Naive thymus-derived CD4-positive, alpha-beta T cell (primary cell): ENCODE measurements at regions of chr1 and their contacts with region 1.

Region 1: DNA sequence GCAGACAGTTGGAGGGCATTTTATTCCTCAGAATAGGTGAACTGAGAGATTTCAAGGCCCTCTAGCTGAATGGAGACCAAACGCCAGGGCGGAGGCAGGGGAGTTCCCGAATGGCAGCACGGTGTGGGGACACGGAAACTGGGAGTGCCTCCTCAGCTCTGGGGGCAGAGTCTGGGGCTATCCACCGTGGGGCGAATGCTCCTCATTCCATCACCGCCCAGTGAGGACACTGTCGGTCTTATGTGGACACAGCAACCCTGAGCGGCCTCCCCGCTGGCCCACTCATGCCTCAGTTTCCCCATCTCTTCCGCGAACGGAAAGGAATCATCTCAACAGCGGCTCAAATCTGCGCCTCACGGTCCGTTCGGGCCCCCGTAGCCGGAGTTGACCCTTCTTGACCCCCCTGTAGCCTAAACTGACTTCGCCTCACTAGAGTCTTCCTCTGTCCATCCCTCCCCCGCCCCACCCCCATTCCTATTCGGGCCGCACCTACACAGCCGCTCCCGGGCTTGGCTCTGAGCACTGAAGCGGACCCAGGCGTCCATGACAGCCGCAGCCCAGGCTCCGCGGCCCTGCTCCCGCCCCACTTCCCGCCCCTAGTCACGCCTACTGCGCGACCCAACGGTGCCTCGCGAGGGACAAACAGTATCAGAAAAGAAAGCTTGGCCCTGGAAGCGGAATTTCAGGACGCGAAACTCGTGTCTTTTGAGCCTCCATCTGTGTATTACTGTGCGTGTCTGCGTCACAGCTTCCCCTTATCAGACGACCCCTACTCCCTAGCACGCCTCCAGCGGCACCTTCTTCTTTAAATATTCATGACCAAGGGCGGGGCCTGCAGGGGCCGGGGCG is at the start of gene PEX11B:
- DNase-seq: peak; percentile 80 to 95 (median 93)
- ATAC-seq: peak; percentile 94
- H3K4me3 ChIP-seq: peak within 1 kb of the TSS; percentile 82
- H3K4me3 Mint-ChIP-seq: peak within 1 kb of the TSS; percentile 92 to 98 (median 96)
- H3K27ac ChIP-seq: peak within 1 kb of the TSS; percentile 83
- H3K27ac Mint-ChIP-seq: peak within 1 kb of the TSS; percentile 93 to 98 (median 96)
- H3K4me1 ChIP-seq: peaks cover 21 to 23% of the 10 kb centered on the region in 2 donors
- H3K4me1 Mint-ChIP-seq: peaks cover 27 to 75% (median 61%) of the 10 kb centered on the region in 7 donors
- H3K27me3 ChIP-seq: no peaks in the 10 kb centered on the region
- H3K27me3 Mint-ChIP-seq: no peaks in the 10 kb centered on the region
- total RNA-seq, gene PEX11B: 16.4 to 40.4 (median 37.7) TPM

Region 2: DNA sequence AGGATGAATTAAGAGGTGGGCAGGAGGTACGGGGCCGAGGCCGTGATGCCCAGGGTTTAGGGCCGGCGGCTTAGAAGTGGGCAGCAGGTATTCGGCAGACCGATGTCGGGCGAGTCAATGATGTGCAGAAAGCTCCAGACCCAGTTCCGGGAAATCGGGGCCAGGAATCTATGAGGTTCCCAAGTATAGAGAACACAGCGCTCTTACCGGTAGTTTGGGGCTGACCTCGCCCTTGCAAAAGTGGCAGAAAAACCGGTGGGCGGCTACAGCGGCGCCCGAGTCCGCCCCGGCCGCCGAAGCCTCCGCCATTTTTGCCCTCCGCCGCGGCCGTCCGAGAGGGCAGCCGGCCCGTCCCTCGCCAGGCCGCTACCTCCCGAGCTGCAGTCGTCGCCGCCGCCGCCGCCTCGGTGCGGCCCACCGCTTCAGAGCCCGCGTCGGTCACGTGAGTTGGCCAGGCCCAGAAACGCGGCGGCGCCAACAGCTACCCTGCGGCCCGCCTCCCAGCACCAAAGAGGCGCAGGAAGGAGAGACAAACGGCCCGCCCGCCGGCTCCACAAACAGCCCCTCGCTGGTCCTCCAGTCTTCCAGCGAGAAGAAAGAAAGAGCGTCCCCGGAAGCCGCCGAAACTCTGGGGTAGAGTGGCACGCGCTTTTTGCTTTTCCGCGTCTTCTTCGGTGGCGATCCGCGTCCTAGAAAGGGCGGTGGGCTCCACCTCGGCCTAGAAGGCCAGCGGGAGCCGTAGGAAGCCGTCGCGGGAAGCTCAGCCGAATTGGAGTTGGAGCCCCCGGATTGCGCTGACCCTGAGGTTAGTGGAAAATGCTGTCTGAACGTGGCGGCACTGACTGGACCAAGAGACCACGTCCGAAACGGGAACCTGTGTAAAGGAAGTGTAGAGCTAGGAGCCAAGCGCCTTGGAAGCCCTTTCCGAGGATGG is 94.5 kb before region 1 on chr1 and contains the starts of genes POLR3C and RNF115:
- CTCF ChIA-PET with region 1: no interaction called
- POLR2A ChIA-PET with region 1: interaction called, 5 read pairs
- intact Hi-C with region 1: loop called in 1 of 2 experiments (anchors 2 kb)
- DNase-seq: peak; percentile 63 to 88 (median 82)
- ATAC-seq: peak; percentile 95
- H3K4me3 ChIP-seq: peak within 1 kb of the TSS; percentile 99
- H3K4me3 Mint-ChIP-seq: peak within 1 kb of the TSS; percentile 91 to 100 (median 98)
- H3K27ac ChIP-seq: peak within 1 kb of the TSS; percentile 82
- H3K27ac Mint-ChIP-seq: peak within 1 kb of the TSS; percentile 91 to 98 (median 96)
- H3K4me1 ChIP-seq: peaks cover 10 to 14% of the 10 kb centered on the region in 2 donors
- H3K4me1 Mint-ChIP-seq: peaks cover 19 to 43% (median 35%) of the 10 kb centered on the region in 7 donors
- H3K27me3 ChIP-seq: no peaks in the 10 kb centered on the region
- H3K27me3 Mint-ChIP-seq: no peaks in the 10 kb centered on the region
- total RNA-seq, gene POLR3C: 22.0 to 44.4 (median 32.5) TPM
- total RNA-seq, gene RNF115: 11.4 to 17.3 (median 15.6) TPM

Region 3: DNA sequence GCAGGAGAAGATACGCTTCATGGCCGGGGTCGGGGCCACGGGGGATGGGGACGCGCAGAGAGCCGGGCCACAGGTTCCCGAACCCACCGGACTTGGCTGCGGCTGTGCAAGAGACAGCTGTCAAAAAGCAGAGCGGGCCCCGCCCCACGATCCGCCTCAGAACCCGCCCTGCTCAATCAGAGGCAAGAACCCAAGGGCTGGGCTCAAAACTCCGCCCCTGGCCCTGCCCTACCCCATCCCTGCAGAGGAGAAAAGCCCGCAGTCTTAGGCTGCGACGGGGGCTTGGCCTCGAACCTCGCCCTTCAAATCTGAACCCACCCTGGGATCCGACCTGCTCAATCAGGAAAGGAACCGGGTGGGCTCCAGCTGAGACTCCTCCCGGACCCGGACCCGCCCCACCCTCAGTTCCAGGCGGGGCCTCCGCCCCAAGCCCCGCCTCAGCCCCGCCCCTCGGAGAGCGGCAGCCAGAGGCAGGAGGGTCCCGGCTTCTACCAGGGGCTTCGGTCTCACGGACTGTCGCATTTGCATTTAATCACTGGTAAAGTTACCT is 32.6 kb before region 1 on chr1 and contains the start of gene ANKRD35:
- CTCF ChIA-PET with region 1: interaction called, 3 read pairs
- POLR2A ChIA-PET with region 1: interaction called, 3 read pairs
- intact Hi-C with region 1: loop called in 1 of 2 experiments (anchors 2 kb)
- DNase-seq: peak; percentile 73 to 87 (median 87)
- ATAC-seq: peak; percentile 99
- H3K4me3 ChIP-seq: peak within 1 kb of the TSS; percentile 60
- H3K4me3 Mint-ChIP-seq: peak within 1 kb of the TSS; percentile 73 to 93 (median 88)
- H3K27ac ChIP-seq: no peak within 1 kb of the TSS
- H3K27ac Mint-ChIP-seq: peak within 1 kb of the TSS in 6 of 9 donors; percentile 6 to 79 (median 39)
- H3K4me1 ChIP-seq: peaks cover 5 to 9% of the 10 kb centered on the region in 2 donors
- H3K4me1 Mint-ChIP-seq: peaks cover 9 to 22% (median 12%) of the 10 kb centered on the region in 7 donors
- H3K27me3 ChIP-seq: no peaks in the 10 kb centered on the region
- H3K27me3 Mint-ChIP-seq: peaks cover 6 to 39% (median 20%) of the 10 kb centered on the region in 5 donors
- total RNA-seq, gene ANKRD35: 0.15 to 0.58 TPM in 2 of 5 experiments, not detected in the others

Region 4: DNA sequence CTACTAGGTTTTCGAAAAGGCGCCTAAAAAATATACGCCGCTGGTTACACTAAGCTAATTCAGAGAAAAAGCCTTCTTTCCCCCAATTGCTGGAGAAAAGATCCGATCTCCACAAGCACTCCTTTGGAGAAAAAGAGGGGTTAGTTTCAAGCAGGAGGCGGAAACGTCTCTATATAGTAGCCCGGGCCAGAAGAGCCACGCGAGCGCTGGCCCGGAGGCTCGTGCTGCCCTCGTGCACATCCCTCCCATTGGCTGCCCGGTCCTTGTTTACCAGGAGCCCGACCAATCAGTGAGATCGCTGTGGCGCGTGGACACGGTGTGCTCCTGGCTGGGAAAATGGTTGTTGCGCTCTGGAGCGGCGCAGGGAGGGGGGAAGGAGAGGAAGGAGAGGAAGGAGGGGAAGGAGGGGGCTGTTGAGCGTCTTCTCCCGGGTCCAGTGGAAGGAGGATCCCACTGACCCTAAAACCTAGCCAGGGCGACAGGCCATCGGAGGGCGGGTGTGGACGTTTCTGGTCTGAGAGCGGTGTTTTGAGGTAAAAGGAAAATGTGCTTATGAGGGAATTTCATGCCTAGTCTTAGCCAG is 78.2 kb after region 1 on chr1 and contains the start of gene TXNIP:
- CTCF ChIA-PET with region 1: no interaction called
- POLR2A ChIA-PET with region 1: interaction called, 14 read pairs
- intact Hi-C with region 1: loop called in 1 of 2 experiments (anchors 2 kb)
- DNase-seq: peak; percentile 66 to 97 (median 94)
- ATAC-seq: peak; percentile 92
- H3K4me3 ChIP-seq: peak within 1 kb of the TSS; percentile 97
- H3K4me3 Mint-ChIP-seq: peak within 1 kb of the TSS; percentile 89 to 99 (median 98)
- H3K27ac ChIP-seq: peak within 1 kb of the TSS; percentile 91
- H3K27ac Mint-ChIP-seq: peak within 1 kb of the TSS; percentile 94 to 99 (median 97)
- H3K4me1 ChIP-seq: peaks cover 41 to 48% of the 10 kb centered on the region in 2 donors
- H3K4me1 Mint-ChIP-seq: peaks cover 43 to 72% (median 54%) of the 10 kb centered on the region in 7 donors
- H3K27me3 ChIP-seq: no peaks in the 10 kb centered on the region
- H3K27me3 Mint-ChIP-seq: peaks cover 0 to 3% (median 0%) of the 10 kb centered on the region in 5 donors
- total RNA-seq, gene TXNIP: 498 to 1,101 (median 659) TPM

Region 5: GRCh38 chr1:146012737-146013403 is 94.5 kb after region 1 on chr1:
- CTCF ChIA-PET with region 1: no interaction called
- POLR2A ChIA-PET with region 1: no interaction called
- intact Hi-C with region 1: loop called (anchors 2 kb)
- DNase-seq: peak in 7 of 9 donors; percentile 60 to 77 (median 65)
- ATAC-seq: peak; percentile 73
- H3K4me3 ChIP-seq: no peak overlapping the region
- H3K4me3 Mint-ChIP-seq: peak overlapping the region in 1 of 10 donors; percentile 53
- H3K27ac ChIP-seq: no peak overlapping the region
- H3K27ac Mint-ChIP-seq: no peak overlapping the region
- H3K4me1 ChIP-seq: peaks cover 0 to 1% of the 10 kb centered on the region in 2 donors
- H3K4me1 Mint-ChIP-seq: peaks cover 4 to 12% (median 10%) of the 10 kb centered on the region in 7 donors
- H3K27me3 ChIP-seq: no peaks in the 10 kb centered on the region
- H3K27me3 Mint-ChIP-seq: peaks cover 3 to 32% (median 4%) of the 10 kb centered on the region in 5 donors

Region 6: GRCh38 chr1:146036965-146037646 is 118.7 kb after region 1 on chr1:
- CTCF ChIA-PET with region 1: no interaction called
- POLR2A ChIA-PET with region 1: interaction called, 5 read pairs
- intact Hi-C with region 1: loop called in 1 of 2 experiments (anchors 1 kb)
- DNase-seq: peak; percentile 52 to 88 (median 83)
- ATAC-seq: peak; percentile 66
- H3K4me3 ChIP-seq: peak overlapping the region; percentile 87
- H3K4me3 Mint-ChIP-seq: peak overlapping the region; percentile 95 to 99 (median 97)
- H3K27ac ChIP-seq: peak overlapping the region; percentile 69
- H3K27ac Mint-ChIP-seq: peak overlapping the region; percentile 93 to 100 (median 98)
- H3K4me1 ChIP-seq: peaks cover 0 to 6% of the 10 kb centered on the region in 2 donors
- H3K4me1 Mint-ChIP-seq: peaks cover 7 to 49% (median 39%) of the 10 kb centered on the region in 7 donors
- H3K27me3 ChIP-seq: no peaks in the 10 kb centered on the region
- H3K27me3 Mint-ChIP-seq: peaks cover 0 to 32% (median 0%) of the 10 kb centered on the region in 5 donors

Region 7: GRCh38 chr1:147273409-147274336 is 1355.3 kb after region 1 on chr1:
- CTCF ChIA-PET with region 1: no interaction called
- POLR2A ChIA-PET with region 1: no interaction called
- intact Hi-C with region 1: no loop called
- DNase-seq: peak in 7 of 9 donors; percentile 12 to 57 (median 42)
- ATAC-seq: peak; percentile 65
- H3K4me3 ChIP-seq: no peak overlapping the region
- H3K4me3 Mint-ChIP-seq: no peak overlapping the region
- H3K27ac ChIP-seq: no peak overlapping the region
- H3K27ac Mint-ChIP-seq: no peak overlapping the region
- H3K4me1 ChIP-seq: no peaks in the 10 kb centered on the region
- H3K4me1 Mint-ChIP-seq: peaks cover 0 to 6% (median 4%) of the 10 kb centered on the region in 7 donors
- H3K27me3 ChIP-seq: no peaks in the 10 kb centered on the region
- H3K27me3 Mint-ChIP-seq: no peaks in the 10 kb centered on the region